ENCODE measurements at regions of chr1 and their contacts with region 1.

Region 1: GRCh38 chr1:198465201-198466144 is 75.0 kb downstream of the ATP6V1G3 start:
- DNase-seq: no peak
- ATAC-seq: peak; percentile 85
- H3K4me3 ChIP-seq: no peak overlapping the region
- H3K27ac ChIP-seq: no peak overlapping the region
- H3K4me1 ChIP-seq: no peaks in the 10 kb centered on the region
- H3K27me3 ChIP-seq: no peaks in the 10 kb centered on the region
- CTCF ChIP-seq: peak; percentile 46 to 74 (median 59)
- EP300 ChIP-seq: no peak
- POLR2A ChIP-seq: no peak
- RAD21 ChIP-seq: peak; percentile 84

Region 2: DNA sequence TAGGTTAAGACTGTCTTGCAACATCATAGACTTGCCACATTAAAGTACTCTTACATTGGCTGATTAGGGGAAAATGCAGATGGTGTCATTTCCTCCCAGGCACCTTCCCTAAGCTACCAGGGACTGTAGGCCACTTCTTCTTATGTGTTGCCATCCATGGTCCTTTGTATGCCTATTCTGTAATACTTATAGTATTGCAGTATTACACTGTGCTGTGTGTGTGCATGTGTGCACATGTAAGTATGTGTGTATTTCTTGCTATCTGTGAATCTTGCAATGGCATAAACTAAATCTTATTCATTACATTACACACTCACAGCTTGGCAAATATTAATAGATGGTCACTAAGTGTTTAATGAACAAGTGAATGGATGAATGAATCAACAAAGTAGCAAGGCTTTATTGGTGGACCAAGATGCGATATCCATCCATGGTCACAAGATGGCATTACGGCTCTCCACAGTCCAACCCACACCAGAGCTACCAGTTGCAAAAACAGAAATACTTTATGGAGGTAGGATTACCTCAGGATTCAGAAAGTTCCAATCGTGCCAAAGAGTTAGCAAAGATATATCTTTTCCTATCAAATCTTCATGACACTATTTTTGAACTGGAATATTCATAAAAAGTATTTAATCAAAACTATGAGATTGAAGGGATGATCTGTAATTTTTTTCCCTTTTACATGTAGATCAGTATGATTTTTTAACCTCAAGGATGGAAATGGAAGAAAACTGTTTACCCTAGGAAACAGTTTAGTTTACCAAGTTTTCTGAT is 850.4 kb before region 1 on chr1:
- CTCF ChIA-PET with region 1: interaction called, 4 read pairs
- POLR2A ChIA-PET with region 1: no interaction called
- RAD21 ChIA-PET with region 1: interaction called, 3 read pairs
- SMC1A ChIA-PET with region 1: interaction called, 3 read pairs
- in situ Hi-C with region 1: no loop called
- intact Hi-C with region 1: loop called (anchors 5 kb)
- DNase-seq: peak; percentile 5
- ATAC-seq: peak; percentile 87
- H3K4me3 ChIP-seq: no peak overlapping the region
- H3K27ac ChIP-seq: no peak overlapping the region
- H3K4me1 ChIP-seq: no peaks in the 10 kb centered on the region
- H3K27me3 ChIP-seq: no peaks in the 10 kb centered on the region
- CTCF ChIP-seq: peak; percentile 52 to 61 (median 56); a peak in 5 of 6 replicates
- EP300 ChIP-seq: no peak
- POLR2A ChIP-seq: no peak
- RAD21 ChIP-seq: peak; percentile 70

Region 3: GRCh38 chr1:198088360-198089071 is 377.0 kb before region 1 on chr1:
- CTCF ChIA-PET with region 1: interaction called, 20 read pairs
- POLR2A ChIA-PET with region 1: no interaction called
- RAD21 ChIA-PET with region 1: interaction called, 4 read pairs
- SMC1A ChIA-PET with region 1: interaction called, 7 read pairs
- in situ Hi-C with region 1: loop called (anchors 5 kb)
- intact Hi-C with region 1: loop called (anchors 1 kb)
- DNase-seq: no peak
- ATAC-seq: peak; percentile 58
- H3K4me3 ChIP-seq: no peak overlapping the region
- H3K27ac ChIP-seq: no peak overlapping the region
- H3K4me1 ChIP-seq: no peaks in the 10 kb centered on the region
- H3K27me3 ChIP-seq: no peaks in the 10 kb centered on the region; a peak in 1 of 4 replicates
- CTCF ChIP-seq: peak; percentile 43 to 64 (median 48); a peak in 5 of 6 replicates
- EP300 ChIP-seq: no peak
- POLR2A ChIP-seq: no peak
- RAD21 ChIP-seq: peak; percentile 72

Region 4: DNA sequence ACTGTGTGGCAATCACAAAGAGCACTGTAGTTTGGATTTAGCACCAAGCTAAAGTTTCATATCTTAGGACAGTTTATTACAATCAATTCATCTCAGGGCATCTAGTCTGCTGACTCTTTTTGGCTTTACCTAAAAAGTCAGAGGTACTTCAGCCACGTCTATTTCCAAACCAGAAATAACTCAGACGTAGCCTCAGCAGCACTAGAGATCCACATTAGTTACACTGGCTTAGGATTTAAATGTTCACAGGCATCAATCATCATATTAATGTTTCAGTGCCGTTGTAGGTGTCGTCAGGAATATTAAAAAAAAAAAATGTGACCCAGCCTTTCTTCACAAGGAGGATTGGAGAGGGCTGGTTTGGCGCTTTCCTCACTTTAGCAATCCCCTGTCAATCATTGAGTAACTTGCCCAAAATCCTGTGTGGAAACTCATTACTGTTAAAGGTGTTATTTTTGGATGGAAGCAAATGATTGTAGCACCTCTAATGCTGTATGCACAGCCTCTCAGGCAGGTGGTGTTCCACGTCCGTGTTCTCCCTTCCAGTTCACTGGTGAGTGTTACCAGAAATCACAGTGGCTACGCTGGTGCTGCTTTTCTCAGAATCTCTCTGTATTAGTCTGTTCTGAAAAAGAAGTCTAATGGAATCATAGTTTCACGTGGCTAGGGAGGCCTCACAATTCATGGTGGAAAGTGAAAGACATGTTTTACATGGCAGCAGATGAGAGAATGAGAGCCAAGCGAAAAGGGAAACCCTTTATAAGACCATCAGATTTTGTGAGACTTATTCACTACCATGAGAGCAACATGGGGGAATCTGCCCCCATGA is 263.3 kb before region 1 on chr1:
- CTCF ChIA-PET with region 1: no interaction called
- POLR2A ChIA-PET with region 1: no interaction called
- RAD21 ChIA-PET with region 1: no interaction called
- SMC1A ChIA-PET with region 1: no interaction called
- in situ Hi-C with region 1: no loop called
- intact Hi-C with region 1: loop called (anchors 10 kb)
- DNase-seq: peak; percentile 37
- ATAC-seq: peak; percentile 83
- H3K4me3 ChIP-seq: peak overlapping the region; percentile 4; the same call in 1 of the 2 replicates
- H3K27ac ChIP-seq: peak overlapping the region; percentile 56
- H3K4me1 ChIP-seq: peaks cover 12% of the 10 kb centered on the region
- H3K27me3 ChIP-seq: no peaks in the 10 kb centered on the region
- CTCF ChIP-seq: no peak
- EP300 ChIP-seq: no peak
- POLR2A ChIP-seq: no peak
- RAD21 ChIP-seq: peak; percentile 39; the same call in 1 of the 2 replicates

Region 5: GRCh38 chr1:198481661-198482060 is 16.2 kb after region 1 on chr1:
- CTCF ChIA-PET with region 1: interaction called, 6 read pairs
- POLR2A ChIA-PET with region 1: no interaction called
- RAD21 ChIA-PET with region 1: interaction called, 3 read pairs
- SMC1A ChIA-PET with region 1: interaction called, 11 read pairs
- in situ Hi-C with region 1: no loop called
- intact Hi-C with region 1: no loop called
- DNase-seq: no peak
- ATAC-seq: no peak
- H3K4me3 ChIP-seq: no peak overlapping the region
- H3K27ac ChIP-seq: no peak overlapping the region
- H3K4me1 ChIP-seq: no peaks in the 10 kb centered on the region
- H3K27me3 ChIP-seq: no peaks in the 10 kb centered on the region
- CTCF ChIP-seq: no peak
- EP300 ChIP-seq: no peak
- POLR2A ChIP-seq: no peak
- RAD21 ChIP-seq: no peak

Measured in GM12878 (cell line).